ENCODE measurements at regions of chr1 and their contacts with region 1.

Region 1: GRCh38 chr1:19602486-19602885 is 41.6 kb upstream of the NBL1 start:
- DNase-seq: no peak
- H3K4me3 ChIP-seq: no peak overlapping the region
- H3K27ac ChIP-seq: peak overlapping the region; percentile 47 to 98 (median 78)
- H3K4me1 ChIP-seq: peaks cover 0 to 89% (median 76%) of the 10 kb centered on the region in 4 donors
- H3K27me3 ChIP-seq: no peaks in the 10 kb centered on the region
- CTCF ChIP-seq: no peak
- EP300 ChIP-seq: peak; percentile 72 to 94 (median 90)
- POLR2A ChIP-seq: no peak

Region 2: DNA sequence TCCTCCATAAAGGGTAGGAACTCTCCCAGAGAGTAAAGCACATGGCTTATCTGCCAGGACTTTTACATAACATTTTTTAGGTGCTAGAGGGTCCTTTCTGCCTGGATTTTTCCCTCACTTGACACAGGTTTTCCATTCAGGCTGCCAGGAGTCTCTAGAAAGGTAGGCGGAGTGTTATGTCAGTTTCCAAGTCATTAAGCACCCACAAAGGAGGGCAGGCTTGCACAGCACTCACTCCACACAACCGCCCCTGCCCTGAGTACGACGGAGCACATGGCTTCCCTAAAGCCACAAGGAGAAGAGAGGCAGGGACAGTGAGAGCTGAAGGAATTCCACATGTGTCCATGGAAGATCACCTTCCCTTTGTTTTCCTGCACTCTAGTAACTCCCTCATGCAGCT is 172.9 kb before region 1 on chr1:
- intact Hi-C with region 1: loop called (anchors 5 kb)
- DNase-seq: peak; percentile 66
- H3K4me3 ChIP-seq: no peak overlapping the region
- H3K27ac ChIP-seq: peak overlapping the region; percentile 85 to 98 (median 91)
- H3K4me1 ChIP-seq: peaks cover 0 to 99% (median 96%) of the 10 kb centered on the region in 4 donors
- H3K27me3 ChIP-seq: no peaks in the 10 kb centered on the region
- CTCF ChIP-seq: no peak
- EP300 ChIP-seq: peak in 1 of 4 donors; percentile 19
- POLR2A ChIP-seq: no peak

Region 3: GRCh38 chr1:19448491-19449439 is 153.7 kb before region 1 on chr1:
- intact Hi-C with region 1: no loop called
- DNase-seq: peak; percentile 93
- H3K4me3 ChIP-seq: no peak overlapping the region
- H3K27ac ChIP-seq: peak overlapping the region; percentile 85 to 98 (median 91)
- H3K4me1 ChIP-seq: peaks cover 0 to 100% (median 96%) of the 10 kb centered on the region in 4 donors
- H3K27me3 ChIP-seq: no peaks in the 10 kb centered on the region
- CTCF ChIP-seq: no peak
- EP300 ChIP-seq: peak; percentile 47 to 69 (median 60)
- POLR2A ChIP-seq: no peak

Measured in sigmoid colon (tissue), 7 donors.